Activated CD4-positive, alpha-beta memory T cell treated with anti-CD3 and anti-CD28 coated beads for 36 hours (primary cell): ENCODE measurements at regions of chr2 and their contacts with region 1.

Region 1: DNA sequence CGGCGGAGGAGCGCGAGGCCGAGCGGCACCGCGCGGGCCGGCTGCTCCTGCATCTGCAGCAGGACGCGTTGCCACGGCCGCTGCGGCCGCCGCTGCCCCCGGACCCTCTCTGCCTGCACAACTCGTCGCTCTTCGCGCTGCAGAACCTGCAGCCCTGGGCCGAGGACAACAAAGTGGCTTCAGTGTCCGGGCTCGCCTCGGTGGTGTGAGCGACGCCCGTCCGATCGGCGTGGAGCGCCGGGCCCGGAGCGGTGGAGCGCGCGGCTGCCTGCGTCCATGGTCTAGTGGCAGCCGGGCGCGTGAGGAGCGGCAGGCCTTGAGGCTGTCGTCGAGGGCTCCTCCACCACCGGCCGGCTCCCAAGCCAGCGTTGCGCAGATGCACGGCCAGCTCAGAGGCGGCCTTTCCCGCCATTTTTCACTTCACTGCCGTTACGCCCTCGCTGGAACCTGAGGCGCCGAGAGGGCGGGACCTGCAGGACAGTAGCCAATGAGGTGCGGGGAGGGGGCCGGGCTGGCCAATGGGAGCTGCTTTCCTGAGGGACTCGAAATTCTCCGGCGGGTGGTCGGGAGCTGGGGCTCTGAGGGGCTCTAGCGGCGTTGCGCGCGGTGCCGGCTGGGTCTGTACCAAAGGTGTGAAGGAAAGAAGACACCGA is 1.9 kb downstream of the TLX2 start:
- DNase-seq: peak; percentile 86
- H3K4me3 Mint-ChIP-seq: peak overlapping the region; percentile 57
- H3K27ac Mint-ChIP-seq: no peak overlapping the region
- H3K4me1 Mint-ChIP-seq: peaks cover 25% of the 10 kb centered on the region
- H3K27me3 Mint-ChIP-seq: peaks cover 69% of the 10 kb centered on the region

Region 2: DNA sequence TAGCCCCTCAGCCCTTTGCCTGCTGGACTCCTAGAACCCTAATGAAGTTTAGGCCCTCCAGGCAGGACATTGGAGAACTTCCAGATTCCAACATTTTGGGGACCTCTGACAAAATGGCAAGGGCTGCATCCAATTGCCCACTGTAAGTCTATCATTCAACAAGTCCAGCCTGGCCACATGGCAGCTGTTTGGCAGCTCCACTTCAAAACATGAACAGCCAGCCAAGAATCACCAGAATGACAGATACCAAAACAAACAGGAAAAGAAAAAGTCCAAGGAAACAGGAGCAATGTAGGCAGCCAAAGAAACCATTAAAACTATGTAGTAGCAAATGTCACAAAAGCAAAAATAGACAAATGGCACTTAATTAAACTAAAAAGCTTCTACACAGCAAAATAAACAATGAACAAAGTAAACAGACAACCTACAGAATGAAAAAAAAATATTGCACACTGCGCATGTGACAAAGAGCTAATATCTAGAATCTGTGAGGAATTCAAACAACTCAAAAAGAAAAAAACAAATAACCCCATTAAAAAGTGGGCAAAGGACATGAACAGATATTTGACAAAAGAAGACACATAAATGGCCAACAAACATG is 198.3 kb before region 1 on chr2:
- CTCF ChIA-PET with region 1: no interaction called
- POLR2A ChIA-PET with region 1: no interaction called
- intact Hi-C with region 1: no loop called
- DNase-seq: no peak
- H3K4me3 Mint-ChIP-seq: no peak overlapping the region
- H3K27ac Mint-ChIP-seq: no peak overlapping the region
- H3K4me1 Mint-ChIP-seq: no peaks in the 10 kb centered on the region
- H3K27me3 Mint-ChIP-seq: no peaks in the 10 kb centered on the region

Region 3: DNA sequence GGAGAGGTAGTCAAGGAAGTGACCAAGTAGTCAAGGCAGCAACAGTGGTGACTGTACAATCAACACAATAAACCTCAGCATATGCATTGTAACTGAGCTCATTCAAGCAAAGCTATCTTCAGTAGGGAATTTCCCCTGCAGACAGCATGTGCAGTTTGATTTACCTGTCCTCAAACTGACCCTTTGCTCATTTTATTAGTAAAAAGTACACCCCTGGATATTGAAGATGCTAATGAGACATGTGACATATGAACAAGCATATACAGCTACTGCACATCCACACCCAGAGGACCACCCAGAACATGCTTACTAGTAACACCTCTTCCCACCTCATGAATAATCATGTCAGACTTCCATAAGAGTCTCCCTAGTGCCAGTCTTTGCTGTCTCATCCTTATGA is 110.1 kb before region 1 on chr2:
- CTCF ChIA-PET with region 1: no interaction called
- POLR2A ChIA-PET with region 1: no interaction called
- intact Hi-C with region 1: no loop called
- DNase-seq: no peak
- H3K4me3 Mint-ChIP-seq: no peak overlapping the region
- H3K27ac Mint-ChIP-seq: no peak overlapping the region
- H3K4me1 Mint-ChIP-seq: no peaks in the 10 kb centered on the region
- H3K27me3 Mint-ChIP-seq: peaks cover 3% of the 10 kb centered on the region

Region 4: GRCh38 chr2:74498500-74499266 is 17.4 kb before region 1 on chr2:
- CTCF ChIA-PET with region 1: no interaction called
- POLR2A ChIA-PET with region 1: interaction called, 6 read pairs
- intact Hi-C with region 1: loop called (anchors 1 kb)
- DNase-seq: peak; percentile 58
- H3K4me3 Mint-ChIP-seq: peak overlapping the region; percentile 75
- H3K27ac Mint-ChIP-seq: peak overlapping the region; percentile 20
- H3K4me1 Mint-ChIP-seq: peaks cover 35% of the 10 kb centered on the region
- H3K27me3 Mint-ChIP-seq: peaks cover 51% of the 10 kb centered on the region